ENCODE measurements at regions of chr6 and their contacts with region 1.

Region 1: GRCh38 chr6:117840541-117840983 is 66.5 kb upstream of the SLC35F1 start:
- DNase-seq: peak; percentile 80
- H3K4me3 ChIP-seq: no peak overlapping the region
- H3K27ac ChIP-seq: no peak overlapping the region
- H3K4me1 ChIP-seq: no peaks in the 10 kb centered on the region
- H3K27me3 ChIP-seq: no peaks in the 10 kb centered on the region
- CTCF ChIP-seq: peak; percentile 76

Region 2: GRCh38 chr6:117615894-117616390 is 224.6 kb before region 1 on chr6:
- CTCF ChIA-PET with region 1: no interaction called
- POLR2A ChIA-PET with region 1: no interaction called
- intact Hi-C with region 1: no loop called
- DNase-seq: no peak
- H3K4me3 ChIP-seq: no peak overlapping the region
- H3K27ac ChIP-seq: no peak overlapping the region
- H3K4me1 ChIP-seq: no peaks in the 10 kb centered on the region
- H3K27me3 ChIP-seq: peaks cover 7% of the 10 kb centered on the region
- CTCF ChIP-seq: no peak

Region 3: DNA sequence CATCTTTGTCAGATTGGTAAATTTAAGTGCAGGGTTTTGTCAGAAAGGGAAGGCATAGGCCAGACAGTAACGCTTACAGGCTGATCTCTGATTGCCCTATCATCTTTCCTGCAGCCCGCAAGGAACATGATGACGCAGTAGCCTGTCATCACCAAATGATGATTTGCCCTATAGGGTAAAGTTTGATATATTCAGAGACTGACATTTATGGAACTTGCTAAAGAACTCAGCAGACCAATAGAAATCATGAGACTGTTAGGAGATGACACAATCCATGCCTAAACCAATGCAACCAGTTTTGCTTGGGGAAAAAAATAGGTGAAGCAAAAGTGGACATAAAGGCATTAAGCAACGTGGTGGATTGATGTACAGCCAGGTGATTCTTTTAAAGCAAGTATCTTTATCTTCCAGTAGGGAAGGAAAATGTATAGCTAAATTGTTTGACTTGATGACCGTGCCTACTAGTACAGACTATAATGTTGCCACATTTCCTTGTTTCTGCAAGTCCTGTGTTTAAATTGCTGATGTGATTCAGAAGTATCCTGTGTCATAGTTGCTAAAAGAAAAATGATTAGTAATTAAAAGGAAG is 162.9 kb before region 1 on chr6:
- CTCF ChIA-PET with region 1: no interaction called
- POLR2A ChIA-PET with region 1: no interaction called
- intact Hi-C with region 1: no loop called
- DNase-seq: no peak
- H3K4me3 ChIP-seq: no peak overlapping the region
- H3K27ac ChIP-seq: no peak overlapping the region
- H3K4me1 ChIP-seq: no peaks in the 10 kb centered on the region
- H3K27me3 ChIP-seq: no peaks in the 10 kb centered on the region
- CTCF ChIP-seq: no peak

Region 4: GRCh38 chr6:118212451-118213173 is 372.1 kb after region 1 on chr6:
- CTCF ChIA-PET with region 1: interaction called, 3 read pairs
- POLR2A ChIA-PET with region 1: no interaction called
- intact Hi-C with region 1: loop called (anchors 5 kb)
- DNase-seq: peak; percentile 63
- H3K4me3 ChIP-seq: no peak overlapping the region
- H3K27ac ChIP-seq: peak overlapping the region; percentile 57
- H3K4me1 ChIP-seq: peaks cover 21% of the 10 kb centered on the region
- H3K27me3 ChIP-seq: no peaks in the 10 kb centered on the region
- CTCF ChIP-seq: no peak

Region 5: GRCh38 chr6:118263921-118264486 is 423.4 kb after region 1 on chr6:
- CTCF ChIA-PET with region 1: interaction called, 3 read pairs
- POLR2A ChIA-PET with region 1: no interaction called
- intact Hi-C with region 1: loop called (anchors 1 kb)
- DNase-seq: peak; percentile 68
- H3K4me3 ChIP-seq: no peak overlapping the region
- H3K27ac ChIP-seq: no peak overlapping the region
- H3K4me1 ChIP-seq: no peaks in the 10 kb centered on the region
- H3K27me3 ChIP-seq: no peaks in the 10 kb centered on the region
- CTCF ChIP-seq: peak; percentile 65

Region 6: GRCh38 chr6:118551063-118552053 is 710.8 kb after region 1 on chr6:
- CTCF ChIA-PET with region 1: no interaction called
- POLR2A ChIA-PET with region 1: no interaction called
- intact Hi-C with region 1: loop called (anchors 1 kb)
- DNase-seq: peak; percentile 67
- H3K4me3 ChIP-seq: no peak overlapping the region
- H3K27ac ChIP-seq: no peak overlapping the region
- H3K4me1 ChIP-seq: peaks cover 15% of the 10 kb centered on the region
- H3K27me3 ChIP-seq: no peaks in the 10 kb centered on the region
- CTCF ChIP-seq: peak; percentile 66

Region 7: GRCh38 chr6:118580585-118581419 is 740.2 kb after region 1 on chr6:
- CTCF ChIA-PET with region 1: interaction called, 5 read pairs
- POLR2A ChIA-PET with region 1: no interaction called
- intact Hi-C with region 1: loop called (anchors 2 kb)
- DNase-seq: peak; percentile 80
- H3K4me3 ChIP-seq: no peak overlapping the region
- H3K27ac ChIP-seq: no peak overlapping the region
- H3K4me1 ChIP-seq: no peaks in the 10 kb centered on the region
- H3K27me3 ChIP-seq: no peaks in the 10 kb centered on the region
- CTCF ChIP-seq: peak; percentile 75

Region 8: DNA sequence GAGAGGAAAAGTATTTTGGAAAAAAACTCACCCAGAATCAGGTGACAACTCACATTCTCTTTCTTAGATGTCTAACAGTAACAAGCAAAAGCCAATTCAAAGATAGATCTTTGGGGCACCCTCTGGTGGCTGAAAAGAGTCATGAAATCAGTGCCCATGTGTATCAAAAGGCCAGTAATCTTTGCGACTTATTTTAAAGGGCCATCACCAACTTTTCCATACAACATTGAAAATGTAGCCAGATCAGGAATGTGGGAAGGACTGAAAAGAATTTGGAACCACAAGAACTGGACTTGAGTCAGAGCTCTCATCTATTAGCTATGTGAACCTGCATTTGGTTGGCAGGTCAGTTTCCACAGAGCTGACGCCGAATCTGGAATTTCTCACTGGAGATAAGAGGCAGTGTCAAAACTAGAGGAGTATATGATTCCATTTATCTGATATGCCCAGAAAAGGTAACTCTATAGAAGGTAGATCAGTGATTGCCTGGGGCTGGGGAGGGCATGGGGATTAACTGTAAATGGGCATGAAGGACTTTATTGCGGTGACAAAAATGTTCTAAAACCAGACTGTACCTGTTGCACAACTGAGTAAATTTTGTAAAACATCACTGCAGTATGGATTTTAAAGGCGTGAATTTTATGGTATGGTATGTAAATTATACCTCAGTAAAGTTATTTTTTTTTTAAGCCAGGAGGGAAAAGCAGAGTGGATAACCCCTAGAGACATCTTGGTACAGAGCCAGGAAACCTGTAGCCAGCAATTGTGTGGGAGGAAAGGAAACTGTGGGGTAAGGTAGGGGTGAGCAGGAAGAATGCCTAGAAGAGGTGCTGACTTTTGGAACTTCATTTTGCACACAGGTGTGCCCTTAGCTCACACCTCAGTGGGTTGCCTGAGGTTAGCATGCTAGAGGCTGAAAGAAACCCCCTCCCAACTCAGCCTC is 936.3 kb after region 1 on chr6:
- CTCF ChIA-PET with region 1: no interaction called
- POLR2A ChIA-PET with region 1: no interaction called
- intact Hi-C with region 1: loop called (anchors 5 kb)
- DNase-seq: peak; percentile 79
- H3K4me3 ChIP-seq: no peak overlapping the region
- H3K27ac ChIP-seq: no peak overlapping the region
- H3K4me1 ChIP-seq: no peaks in the 10 kb centered on the region
- H3K27me3 ChIP-seq: no peaks in the 10 kb centered on the region
- CTCF ChIP-seq: peak; percentile 85

Measured in A673 (cell line).